PC-9 (cell line): ENCODE measurements at regions of chr3 and their contacts with region 1.

Region 1: GRCh38 chr3:124916837-124917409 is 17.6 kb downstream of the MUC13 start:
- DNase-seq: no peak
- H3K4me3 ChIP-seq: no peak overlapping the region
- H3K27ac ChIP-seq: no peak overlapping the region
- H3K4me1 ChIP-seq: no peaks in the 10 kb centered on the region
- H3K27me3 ChIP-seq: no peaks in the 10 kb centered on the region; the same call in 1 of the 2 replicates
- CTCF ChIP-seq: no peak

Region 2: DNA sequence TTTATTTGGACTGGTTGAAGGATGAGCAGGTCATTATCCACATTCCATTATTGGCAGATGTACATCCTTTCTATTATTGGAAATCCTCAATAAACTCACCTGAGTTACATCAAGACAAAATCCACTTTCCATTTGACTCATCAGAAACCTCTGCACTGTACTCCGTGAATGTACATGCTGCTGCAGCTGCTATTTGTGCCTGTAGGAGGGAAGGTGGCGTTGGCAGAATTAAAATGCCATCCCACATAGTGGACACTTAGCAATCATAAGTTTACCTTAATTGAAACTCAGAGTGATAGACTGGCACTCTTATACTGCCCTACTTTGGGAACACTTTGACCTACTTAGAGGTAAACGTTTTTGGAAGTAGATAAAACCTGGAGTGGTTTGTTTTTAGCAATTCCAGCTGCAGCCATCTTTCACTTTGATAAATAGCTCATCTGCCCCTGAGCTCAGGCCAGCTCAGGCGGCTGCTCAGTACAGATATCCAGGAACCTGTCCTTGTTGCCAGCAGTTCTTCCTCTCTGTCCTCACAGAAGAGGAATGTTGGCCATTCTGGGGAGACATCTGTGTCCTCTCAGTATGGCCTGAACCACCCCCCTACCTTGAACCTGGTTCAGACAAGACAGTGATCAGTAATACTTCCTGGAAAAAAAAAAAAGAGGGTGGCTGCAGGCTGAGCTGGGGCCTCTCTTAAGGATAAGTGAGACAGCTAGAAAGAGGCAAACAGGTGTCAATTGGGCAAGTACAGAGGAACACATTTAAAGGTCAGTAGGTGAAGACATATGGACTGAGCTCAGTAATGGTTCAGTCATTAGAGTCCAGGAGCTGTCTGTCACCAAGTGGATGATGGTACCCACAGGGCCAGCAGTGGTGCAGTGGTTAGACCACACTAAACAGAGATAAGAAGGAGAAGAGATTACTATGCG is 340.1 kb before region 1 on chr3:
- CTCF ChIA-PET with region 1: no interaction called
- POLR2A ChIA-PET with region 1: interaction called, 17 read pairs
- intact Hi-C with region 1: no loop called
- DNase-seq: no peak
- H3K4me3 ChIP-seq: no peak overlapping the region
- H3K27ac ChIP-seq: no peak overlapping the region
- H3K4me1 ChIP-seq: no peaks in the 10 kb centered on the region
- H3K27me3 ChIP-seq: no peaks in the 10 kb centered on the region
- CTCF ChIP-seq: no peak

Region 3: GRCh38 chr3:124860599-124860998 is 56.3 kb before region 1 on chr3:
- CTCF ChIA-PET with region 1: no interaction called
- POLR2A ChIA-PET with region 1: no interaction called
- intact Hi-C with region 1: no loop called
- DNase-seq: peak; percentile 86 to 95
- H3K4me3 ChIP-seq: no peak overlapping the region
- H3K27ac ChIP-seq: peak overlapping the region; percentile 65
- H3K4me1 ChIP-seq: peaks cover 26% of the 10 kb centered on the region
- H3K27me3 ChIP-seq: no peaks in the 10 kb centered on the region
- CTCF ChIP-seq: no peak

Region 4: GRCh38 chr3:124887177-124887931 is 29.6 kb before region 1 on chr3 and contains the start of gene ITGB5:
- CTCF ChIA-PET with region 1: no interaction called
- POLR2A ChIA-PET with region 1: interaction called, 40 read pairs
- intact Hi-C with region 1: no loop called
- DNase-seq: peak; percentile 56 to 89
- H3K4me3 ChIP-seq: peak within 1 kb of the TSS; percentile 84
- H3K27ac ChIP-seq: peak within 1 kb of the TSS; percentile 69
- H3K4me1 ChIP-seq: peaks cover 41% of the 10 kb centered on the region
- H3K27me3 ChIP-seq: no peaks in the 10 kb centered on the region
- CTCF ChIP-seq: no peak
- total RNA-seq, gene ITGB5: 226 and 287 TPM in 2 replicates

Region 5: DNA sequence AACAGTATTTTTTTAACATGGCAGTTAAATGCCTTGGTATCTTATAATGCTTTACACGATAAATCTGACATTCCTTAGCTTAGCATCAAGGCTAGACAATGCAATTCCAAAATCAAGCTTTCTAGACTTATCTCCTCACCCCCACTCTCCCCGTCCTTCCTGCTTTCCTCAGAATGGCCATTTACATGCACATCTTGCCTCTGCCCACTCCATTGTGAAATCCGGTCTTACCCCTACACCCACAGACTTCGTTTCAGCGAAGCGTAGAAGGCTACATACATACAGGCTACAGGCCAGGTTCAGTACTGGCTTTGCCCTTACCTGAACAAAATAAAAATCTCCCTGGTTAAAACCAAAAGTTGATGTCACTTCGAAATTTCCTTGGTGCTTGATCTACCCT is 354.2 kb after region 1 on chr3:
- CTCF ChIA-PET with region 1: interaction called, 12 read pairs
- POLR2A ChIA-PET with region 1: no interaction called
- intact Hi-C with region 1: no loop called
- DNase-seq: no peak
- H3K4me3 ChIP-seq: no peak overlapping the region
- H3K27ac ChIP-seq: no peak overlapping the region
- H3K4me1 ChIP-seq: no peaks in the 10 kb centered on the region
- H3K27me3 ChIP-seq: no peaks in the 10 kb centered on the region
- CTCF ChIP-seq: no peak